Gastrocnemius medialis (tissue), 4 donors: ENCODE measurements at regions of chr6 and their contacts with region 1.

Region 1: GRCh38 chr6:72084992-72085569 is 198.7 kb downstream of the RIMS1 start:
- DNase-seq: no peak
- ATAC-seq: no peak
- H3K4me3 ChIP-seq: no peak overlapping the region
- H3K27ac ChIP-seq: no peak overlapping the region
- H3K4me1 ChIP-seq: no peaks in the 10 kb centered on the region
- H3K27me3 ChIP-seq: no peaks in the 10 kb centered on the region
- CTCF ChIP-seq: peak in 2 of 5 experiments; percentile 35 to 36
- POLR2A ChIP-seq: no peak

Region 2: DNA sequence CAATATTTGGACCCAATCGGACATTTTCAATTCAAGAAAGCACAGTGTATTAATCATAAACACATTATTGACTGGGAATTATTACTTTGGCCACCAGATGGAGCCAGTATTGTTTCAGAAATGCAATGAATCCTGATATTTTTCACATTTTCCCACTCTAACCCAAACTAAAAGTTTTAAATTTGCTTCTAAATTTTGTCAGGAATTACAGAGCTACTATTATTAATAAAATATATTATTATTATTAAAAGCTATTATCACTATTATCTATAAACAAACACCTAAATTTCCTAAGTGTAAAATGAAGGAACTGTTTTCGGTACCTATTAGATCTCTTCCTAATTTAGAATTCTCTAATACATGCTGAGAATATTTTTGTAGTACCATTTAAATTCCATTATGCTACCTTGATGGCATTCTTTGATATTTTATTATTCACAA is 551.1 kb before region 1 on chr6:
- in situ Hi-C with region 1: loop called in 3 of 4 experiments (anchors 5 to 25 kb)
- intact Hi-C with region 1: loop called (anchors 5 kb)
- DNase-seq: no peak
- ATAC-seq: no peak
- H3K4me3 ChIP-seq: no peak overlapping the region
- H3K27ac ChIP-seq: no peak overlapping the region
- H3K4me1 ChIP-seq: no peaks in the 10 kb centered on the region
- H3K27me3 ChIP-seq: no peaks in the 10 kb centered on the region
- CTCF ChIP-seq: peak in 3 of 5 experiments; percentile 23 to 59 (median 51)
- POLR2A ChIP-seq: no peak